ENCODE measurements at regions of chr1 and their contacts with region 1.

Region 1: DNA sequence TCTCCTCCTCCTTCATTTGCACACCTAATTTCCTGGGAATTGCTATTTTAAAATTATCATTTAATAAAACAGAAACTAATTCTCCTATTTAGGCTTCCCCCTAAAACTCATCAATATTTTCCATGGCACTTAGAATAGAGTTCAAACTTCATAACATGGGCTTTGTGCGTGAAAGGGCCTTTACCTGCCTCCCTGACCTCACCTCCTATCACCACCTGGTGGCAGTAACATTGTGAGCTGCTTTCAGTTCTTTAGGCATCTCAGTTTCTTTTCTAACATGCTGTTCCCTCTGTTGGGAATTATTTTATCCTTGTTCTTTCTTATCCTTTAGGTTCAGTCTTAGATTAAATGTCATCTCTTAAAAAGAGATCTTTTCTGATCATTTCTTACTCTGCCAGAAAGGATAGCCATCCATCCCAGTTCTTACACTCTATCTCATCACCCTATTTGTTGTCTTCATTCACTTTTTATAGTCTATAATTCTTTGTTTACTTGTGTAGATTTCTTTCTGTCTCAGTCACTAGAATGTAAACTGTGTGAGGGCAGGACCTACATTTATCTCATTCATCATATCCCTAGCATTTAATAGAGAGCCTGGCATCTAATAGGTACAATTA is 133.8 kb upstream of the KIAA1614 start:
- DNase-seq: peak; percentile 12
- H3K4me3 ChIP-seq: no peak overlapping the region
- H3K27ac ChIP-seq: no peak overlapping the region
- H3K4me1 ChIP-seq: no peaks in the 10 kb centered on the region
- H3K27me3 ChIP-seq: no peaks in the 10 kb centered on the region
- CTCF ChIP-seq: peak; percentile 63 to 66

Region 2: GRCh38 chr1:180533266-180533987 is 245.5 kb before region 1 on chr1:
- CTCF ChIA-PET with region 1: no interaction called
- dilution Hi-C with region 1: no loop called
- in situ Hi-C with region 1: no loop called
- intact Hi-C with region 1: loop called (anchors 5 kb)
- DNase-seq: peak; percentile 33
- H3K4me3 ChIP-seq: no peak overlapping the region
- H3K27ac ChIP-seq: no peak overlapping the region
- H3K4me1 ChIP-seq: peaks cover 15% of the 10 kb centered on the region
- H3K27me3 ChIP-seq: no peaks in the 10 kb centered on the region
- CTCF ChIP-seq: peak; percentile 43 to 64

Region 3: DNA sequence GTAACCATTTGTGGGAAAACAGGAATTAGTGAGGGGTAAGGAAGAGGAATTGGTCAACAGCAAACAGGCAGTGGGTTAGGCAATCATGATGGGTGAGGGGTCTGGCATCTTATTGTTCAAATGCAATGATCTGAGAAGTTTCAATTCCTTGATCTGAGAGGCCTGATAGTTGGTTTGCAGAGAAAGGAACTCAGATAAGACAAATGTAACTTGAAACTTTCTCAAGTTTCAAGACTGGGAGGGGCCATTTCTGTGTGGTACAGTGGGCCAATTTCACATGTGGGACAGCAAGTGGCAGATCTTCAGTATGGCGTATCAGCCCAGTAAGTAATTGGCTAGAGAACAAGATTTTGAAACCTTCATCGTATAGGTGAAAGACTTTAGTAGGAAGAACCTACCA is 44.5 kb before region 1 on chr1:
- CTCF ChIA-PET with region 1: no interaction called
- dilution Hi-C with region 1: loop called (anchors 5 kb)
- in situ Hi-C with region 1: no loop called
- intact Hi-C with region 1: no loop called
- DNase-seq: peak; percentile 1
- H3K4me3 ChIP-seq: no peak overlapping the region
- H3K27ac ChIP-seq: no peak overlapping the region
- H3K4me1 ChIP-seq: no peaks in the 10 kb centered on the region
- H3K27me3 ChIP-seq: no peaks in the 10 kb centered on the region
- CTCF ChIP-seq: no peak

Region 4: GRCh38 chr1:180851995-180852887 is 73.4 kb after region 1 on chr1:
- CTCF ChIA-PET with region 1: no interaction called
- dilution Hi-C with region 1: loop called (anchors 5 kb)
- in situ Hi-C with region 1: no loop called
- intact Hi-C with region 1: no loop called
- DNase-seq: no peak
- H3K4me3 ChIP-seq: no peak overlapping the region
- H3K27ac ChIP-seq: no peak overlapping the region
- H3K4me1 ChIP-seq: peaks cover 12% of the 10 kb centered on the region
- H3K27me3 ChIP-seq: no peaks in the 10 kb centered on the region
- CTCF ChIP-seq: no peak

Region 5: DNA sequence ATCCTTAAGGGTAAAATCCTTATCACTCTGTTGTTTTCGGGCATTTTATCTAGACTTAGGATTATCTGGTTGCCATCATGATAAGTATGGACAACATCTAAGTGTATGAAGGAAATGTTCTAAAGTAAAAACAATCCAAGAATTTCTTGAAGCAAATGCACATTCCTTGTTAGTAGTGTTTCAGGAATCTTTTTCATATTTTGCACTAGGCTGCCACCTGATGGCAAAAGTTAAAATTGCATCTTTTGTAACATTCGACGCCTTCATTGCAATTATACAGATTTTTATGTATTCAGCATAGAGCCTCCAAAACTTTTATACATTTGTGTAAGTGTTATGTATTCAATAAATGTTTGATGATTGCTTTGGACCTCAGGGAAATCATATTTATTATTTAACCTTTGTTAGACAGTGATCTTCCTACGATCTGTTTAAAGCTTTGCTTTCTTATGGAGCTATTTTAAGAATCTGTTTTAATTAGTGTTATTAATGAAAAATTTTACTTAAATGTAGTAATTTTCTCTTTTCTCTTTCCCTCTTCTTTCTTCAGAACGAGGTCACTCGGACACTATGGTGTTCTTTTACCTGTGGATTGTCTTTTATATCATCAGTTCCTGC is 84.4 kb after region 1 on chr1:
- CTCF ChIA-PET with region 1: interaction called, 4 read pairs
- dilution Hi-C with region 1: no loop called
- in situ Hi-C with region 1: no loop called
- intact Hi-C with region 1: loop called (anchors 5 kb)
- DNase-seq: peak; percentile 32
- H3K4me3 ChIP-seq: no peak overlapping the region
- H3K27ac ChIP-seq: no peak overlapping the region
- H3K4me1 ChIP-seq: peaks cover 9% of the 10 kb centered on the region
- H3K27me3 ChIP-seq: no peaks in the 10 kb centered on the region
- CTCF ChIP-seq: peak; percentile 51 to 62

Region 6: DNA sequence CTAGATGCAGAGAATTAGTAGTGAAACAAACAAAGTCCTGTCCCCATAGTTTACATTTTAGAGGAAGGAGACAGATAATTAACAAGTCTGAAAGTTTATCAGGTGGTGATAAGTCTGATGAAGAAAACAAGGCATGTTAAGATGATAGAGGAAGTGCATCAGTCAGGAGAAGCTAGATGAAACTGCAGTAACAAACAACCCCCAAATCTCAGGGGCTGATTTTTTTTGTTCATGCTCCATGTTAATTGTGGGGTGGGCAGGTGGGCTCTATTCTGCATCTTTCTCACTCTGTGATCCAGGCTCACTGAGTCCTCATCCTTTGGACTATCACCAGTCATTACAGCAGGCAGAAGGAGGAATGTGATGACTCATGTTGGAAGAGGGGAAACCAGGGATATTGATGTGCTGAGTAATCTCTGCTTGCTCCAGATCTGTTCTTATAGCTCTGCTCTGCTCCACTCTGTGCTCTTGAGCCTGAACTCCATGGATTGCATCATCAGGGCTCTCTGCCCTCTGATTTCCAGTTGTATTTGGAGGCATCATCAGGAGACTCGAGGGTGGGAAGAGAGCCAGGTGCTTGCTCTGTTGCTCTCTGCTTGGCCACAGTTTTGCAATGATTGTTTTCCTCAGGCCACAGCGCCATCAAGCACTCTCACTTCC is 476.5 kb after region 1 on chr1:
- CTCF ChIA-PET with region 1: no interaction called
- dilution Hi-C with region 1: no loop called
- in situ Hi-C with region 1: no loop called
- intact Hi-C with region 1: no loop called
- DNase-seq: peak; percentile 96
- H3K4me3 ChIP-seq: no peak overlapping the region
- H3K27ac ChIP-seq: no peak overlapping the region
- H3K4me1 ChIP-seq: peaks cover 34% of the 10 kb centered on the region
- H3K27me3 ChIP-seq: no peaks in the 10 kb centered on the region
- CTCF ChIP-seq: no peak